AG04450 (cell line): ENCODE measurements at regions of chr17 and their contacts with region 1.

Region 1: GRCh38 chr17:27879987-27880608 is 13.1 kb downstream of the LYRM9 start:
- DNase-seq: peak; percentile 29
- H3K4me3 ChIP-seq: no peak overlapping the region
- H3K27ac ChIP-seq: no peak overlapping the region
- H3K27me3 ChIP-seq: peaks cover 8% of the 10 kb centered on the region
- CTCF ChIP-seq: peak; percentile 89

Region 2: GRCh38 chr17:27654654-27655524 is 225.2 kb before region 1 on chr17:
- CTCF ChIA-PET with region 1: interaction called, 28 read pairs
- POLR2A ChIA-PET with region 1: no interaction called
- DNase-seq: peak; percentile 6
- H3K4me3 ChIP-seq: no peak overlapping the region
- H3K27ac ChIP-seq: no peak overlapping the region
- H3K27me3 ChIP-seq: no peaks in the 10 kb centered on the region
- CTCF ChIP-seq: peak; percentile 76

Region 3: DNA sequence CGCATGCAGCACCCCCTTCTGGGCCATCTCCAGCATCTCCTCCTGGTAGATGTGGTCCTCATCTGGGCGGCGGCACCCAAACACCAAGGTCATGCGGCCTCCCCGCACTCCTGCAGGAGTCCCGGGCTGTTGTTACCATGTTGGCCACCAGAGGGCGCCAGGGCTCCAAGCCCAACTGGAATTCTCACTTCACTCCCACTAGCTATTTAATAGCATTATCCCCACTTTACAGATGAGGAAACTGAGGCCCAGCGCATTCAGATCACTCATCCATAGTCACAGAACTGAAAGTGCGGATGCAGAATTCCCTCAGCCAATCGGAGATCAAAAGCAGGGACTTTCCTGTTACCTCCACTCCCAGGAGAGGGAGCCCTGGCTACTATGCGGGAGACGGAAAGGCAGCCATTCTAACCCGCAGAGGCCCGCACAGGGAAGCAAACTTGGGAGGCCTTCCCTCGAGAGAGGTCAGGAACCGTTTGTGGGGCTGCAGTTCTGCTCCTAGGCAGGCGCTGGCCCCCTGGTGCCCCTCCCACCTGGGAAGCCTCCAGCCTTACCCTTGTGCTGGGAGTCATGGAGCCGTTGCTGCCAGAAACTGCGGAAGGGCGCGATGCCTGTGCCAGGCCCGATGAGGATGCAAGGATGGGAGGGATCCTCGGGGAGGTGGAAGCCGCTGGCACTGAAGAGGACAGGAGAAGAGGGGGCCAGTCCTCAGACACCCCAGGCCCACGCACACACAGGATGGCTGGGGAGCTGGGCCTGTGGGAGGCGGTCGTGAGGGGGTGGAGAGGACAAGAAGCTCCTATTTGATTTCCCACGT is 119.8 kb before region 1 on chr17:
- CTCF ChIA-PET with region 1: interaction called, 84 read pairs
- POLR2A ChIA-PET with region 1: interaction called, 4 read pairs
- DNase-seq: no peak
- H3K4me3 ChIP-seq: no peak overlapping the region
- H3K27ac ChIP-seq: no peak overlapping the region
- H3K27me3 ChIP-seq: peaks cover 2% of the 10 kb centered on the region
- CTCF ChIP-seq: peak; percentile 82

Region 4: GRCh38 chr17:27892866-27893769 is 13.0 kb after region 1 on chr17 and contains the start of gene LYRM9:
- CTCF ChIA-PET with region 1: interaction called, 106 read pairs
- POLR2A ChIA-PET with region 1: no interaction called
- DNase-seq: peak; percentile 37
- H3K4me3 ChIP-seq: peak within 1 kb of the TSS; percentile 65
- H3K27ac ChIP-seq: peak within 1 kb of the TSS; percentile 21
- H3K27me3 ChIP-seq: peaks cover 4% of the 10 kb centered on the region
- CTCF ChIP-seq: peak; percentile 78
- polyA plus RNA-seq, gene LYRM9: 4.9 and 6.1 TPM in 2 replicates

Region 5: GRCh38 chr17:28216528-28216927 is 336.4 kb after region 1 on chr17:
- CTCF ChIA-PET with region 1: no interaction called
- POLR2A ChIA-PET with region 1: no interaction called
- DNase-seq: no peak
- H3K4me3 ChIP-seq: no peak overlapping the region
- H3K27ac ChIP-seq: no peak overlapping the region
- H3K27me3 ChIP-seq: no peaks in the 10 kb centered on the region
- CTCF ChIP-seq: no peak